Breast epithelium (tissue), 4 donors: ENCODE measurements at regions of chr10 and their contacts with region 1.

Region 1: DNA sequence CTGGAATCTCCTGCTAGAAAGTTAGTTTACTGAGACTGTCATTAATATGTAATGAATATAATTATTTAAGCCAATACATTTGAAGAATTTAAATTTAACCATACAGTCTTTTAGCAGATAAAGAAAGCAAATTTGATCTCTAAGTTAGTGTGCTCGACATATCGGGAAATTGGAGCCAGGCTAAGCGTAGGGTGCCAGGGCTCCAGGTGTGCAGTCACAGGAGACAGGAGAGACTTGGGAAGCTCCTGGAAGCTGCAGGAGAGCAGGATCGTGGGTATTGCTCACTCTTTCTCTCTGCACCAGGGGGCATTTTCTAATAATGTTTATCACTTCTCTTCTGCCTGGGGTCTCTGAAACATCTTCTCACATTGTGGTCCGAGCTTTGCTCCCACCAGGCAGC is 342.0 kb upstream of the ANKRD30A start:
- DNase-seq: no peak
- H3K4me3 ChIP-seq: no peak overlapping the region
- H3K27ac ChIP-seq: no peak overlapping the region
- H3K4me1 ChIP-seq: no peaks in the 10 kb centered on the region
- H3K27me3 ChIP-seq: no peaks in the 10 kb centered on the region
- CTCF ChIP-seq: no peak
- POLR2A ChIP-seq: no peak

Region 2: DNA sequence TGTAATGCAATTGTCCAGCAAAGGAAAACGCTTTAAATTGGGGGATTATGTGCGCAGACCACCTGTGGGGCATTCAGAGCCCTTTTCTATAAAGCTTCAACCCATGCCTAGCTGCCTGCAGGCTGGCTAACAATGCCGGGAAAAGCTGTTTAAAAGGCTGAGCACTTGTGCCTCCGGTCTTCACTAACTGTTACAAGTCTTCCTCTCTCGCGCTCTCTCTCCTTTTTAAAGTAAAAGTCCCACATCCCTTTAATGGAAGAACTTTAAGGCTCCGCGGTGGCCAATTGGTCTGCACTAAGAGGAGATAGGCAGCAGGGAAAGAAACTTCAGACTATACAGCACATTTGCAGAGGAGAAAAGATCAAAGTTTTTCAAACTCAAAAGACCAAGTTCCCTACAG is 1145.9 kb before region 1 on chr10:
- intact Hi-C with region 1: loop called (anchors 2 kb)
- DNase-seq: no peak
- H3K4me3 ChIP-seq: peak overlapping the region in 2 of 3 donors; percentile 12 to 21
- H3K27ac ChIP-seq: no peak overlapping the region
- H3K4me1 ChIP-seq: no peaks in the 10 kb centered on the region
- H3K27me3 ChIP-seq: no peaks in the 10 kb centered on the region
- CTCF ChIP-seq: no peak
- POLR2A ChIP-seq: no peak